ENCODE measurements at regions of chr7 and their contacts with region 1.

Region 1: GRCh38 chr7:24819916-24820689 is 62.8 kb upstream of the GSDME start:
- DNase-seq: peak; percentile 88
- ATAC-seq: peak; percentile 56
- H3K4me3 ChIP-seq: peak overlapping the region in 1 of 5 experiments; percentile 17
- H3K4me3 Mint-ChIP-seq: peak overlapping the region; percentile 83
- H3K27ac ChIP-seq: peak overlapping the region; percentile 76 to 83
- H3K27ac Mint-ChIP-seq: peak overlapping the region; percentile 94
- H3K4me1 ChIP-seq: peaks cover 27% of the 10 kb centered on the region in 2 donors
- H3K4me1 Mint-ChIP-seq: peaks cover 40% of the 10 kb centered on the region
- H3K27me3 ChIP-seq: no peaks in the 10 kb centered on the region
- H3K27me3 Mint-ChIP-seq: no peaks in the 10 kb centered on the region
- CTCF ChIP-seq: peak; percentile 93

Region 2: GRCh38 chr7:24786941-24787340 is 33.2 kb before region 1 on chr7:
- CTCF ChIA-PET with region 1: no interaction called
- POLR2A ChIA-PET with region 1: no interaction called
- intact Hi-C with region 1: no loop called
- DNase-seq: no peak
- ATAC-seq: peak; percentile 33
- H3K4me3 ChIP-seq: no peak overlapping the region
- H3K4me3 Mint-ChIP-seq: no peak overlapping the region
- H3K27ac ChIP-seq: no peak overlapping the region
- H3K27ac Mint-ChIP-seq: no peak overlapping the region
- H3K4me1 ChIP-seq: no peaks in the 10 kb centered on the region
- H3K4me1 Mint-ChIP-seq: no peaks in the 10 kb centered on the region
- H3K27me3 ChIP-seq: peaks cover 0 to 2% (median 0%) of the 10 kb centered on the region in 4 experiments
- H3K27me3 Mint-ChIP-seq: no peaks in the 10 kb centered on the region
- CTCF ChIP-seq: no peak

Region 3: DNA sequence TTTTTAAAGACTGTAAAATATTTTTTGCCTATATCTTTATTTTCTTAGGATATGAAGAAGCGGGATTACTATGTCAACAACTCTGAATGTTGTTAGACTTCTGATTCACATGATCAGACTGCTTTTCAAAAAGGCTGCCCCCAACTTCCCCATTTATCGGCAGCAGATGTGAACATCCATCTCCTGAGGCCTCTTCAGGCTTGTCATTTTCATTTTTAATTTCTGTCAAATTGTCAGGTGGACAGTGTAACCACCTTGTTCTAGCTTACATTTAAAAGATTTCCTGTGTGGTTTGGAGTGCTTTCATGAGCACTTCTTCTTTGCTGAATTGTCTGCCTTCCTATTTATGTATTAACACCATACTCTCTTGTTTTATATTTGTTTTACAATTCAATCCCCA is 16.0 kb after region 1 on chr7:
- CTCF ChIA-PET with region 1: interaction called, 129 read pairs
- POLR2A ChIA-PET with region 1: interaction called, 17 read pairs
- intact Hi-C with region 1: loop called (anchors 1 kb)
- DNase-seq: peak; percentile 89
- ATAC-seq: peak; percentile 80
- H3K4me3 ChIP-seq: peak overlapping the region in 1 of 5 experiments; percentile 46
- H3K4me3 Mint-ChIP-seq: peak overlapping the region; percentile 80
- H3K27ac ChIP-seq: peak overlapping the region; percentile 97
- H3K27ac Mint-ChIP-seq: peak overlapping the region; percentile 98
- H3K4me1 ChIP-seq: peaks cover 72 to 74% of the 10 kb centered on the region in 2 donors
- H3K4me1 Mint-ChIP-seq: peaks cover 75% of the 10 kb centered on the region
- H3K27me3 ChIP-seq: no peaks in the 10 kb centered on the region
- H3K27me3 Mint-ChIP-seq: no peaks in the 10 kb centered on the region
- CTCF ChIP-seq: no peak

Region 4: GRCh38 chr7:24877790-24878311 is 57.7 kb after region 1 on chr7:
- CTCF ChIA-PET with region 1: interaction called, 38 read pairs
- POLR2A ChIA-PET with region 1: interaction called, 4 read pairs
- intact Hi-C with region 1: loop called (anchors 1 kb)
- DNase-seq: peak; percentile 59
- ATAC-seq: peak; percentile 90
- H3K4me3 ChIP-seq: no peak overlapping the region
- H3K4me3 Mint-ChIP-seq: peak overlapping the region; percentile 43
- H3K27ac ChIP-seq: peak overlapping the region in 1 of 2 donors; percentile 43
- H3K27ac Mint-ChIP-seq: peak overlapping the region; percentile 54
- H3K4me1 ChIP-seq: peaks cover 19 to 20% of the 10 kb centered on the region in 2 donors
- H3K4me1 Mint-ChIP-seq: peaks cover 29% of the 10 kb centered on the region
- H3K27me3 ChIP-seq: no peaks in the 10 kb centered on the region
- H3K27me3 Mint-ChIP-seq: no peaks in the 10 kb centered on the region
- CTCF ChIP-seq: no peak

Region 5: DNA sequence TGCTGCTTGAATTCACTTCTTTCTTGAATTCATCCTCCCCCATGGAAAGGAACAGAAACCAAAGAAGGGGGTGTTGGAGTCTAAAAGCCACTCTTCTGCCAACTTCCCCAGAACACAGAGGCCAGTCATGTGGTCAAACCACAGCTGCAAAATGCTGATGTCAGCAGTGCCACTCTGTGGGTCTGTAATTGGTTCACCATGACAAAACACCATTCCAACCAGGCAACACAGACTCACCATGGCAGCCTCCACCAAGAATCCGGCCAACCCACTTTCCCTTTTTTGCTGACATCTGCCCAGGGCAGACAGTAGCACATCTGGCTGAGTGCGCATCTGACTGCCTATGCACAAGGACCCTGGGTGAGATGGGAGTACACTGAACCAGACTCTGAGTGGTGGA is 143.1 kb after region 1 on chr7:
- CTCF ChIA-PET with region 1: interaction called, 9 read pairs
- POLR2A ChIA-PET with region 1: no interaction called
- intact Hi-C with region 1: loop called (anchors 1 kb)
- DNase-seq: peak; percentile 88
- ATAC-seq: peak; percentile 88
- H3K4me3 ChIP-seq: no peak overlapping the region
- H3K4me3 Mint-ChIP-seq: peak overlapping the region; percentile 64
- H3K27ac ChIP-seq: peak overlapping the region; percentile 3 to 54
- H3K27ac Mint-ChIP-seq: peak overlapping the region; percentile 89
- H3K4me1 ChIP-seq: peaks cover 42 to 47% of the 10 kb centered on the region in 2 donors
- H3K4me1 Mint-ChIP-seq: peaks cover 80% of the 10 kb centered on the region
- H3K27me3 ChIP-seq: no peaks in the 10 kb centered on the region
- H3K27me3 Mint-ChIP-seq: no peaks in the 10 kb centered on the region
- CTCF ChIP-seq: no peak

Region 6: GRCh38 chr7:25075459-25075858 is 255.4 kb after region 1 on chr7:
- CTCF ChIA-PET with region 1: interaction called, 246 read pairs
- POLR2A ChIA-PET with region 1: interaction called, 6 read pairs
- intact Hi-C with region 1: loop called (anchors 1 kb)
- DNase-seq: no peak
- ATAC-seq: no peak
- H3K4me3 ChIP-seq: no peak overlapping the region
- H3K4me3 Mint-ChIP-seq: no peak overlapping the region
- H3K27ac ChIP-seq: no peak overlapping the region
- H3K27ac Mint-ChIP-seq: no peak overlapping the region
- H3K4me1 ChIP-seq: no peaks in the 10 kb centered on the region
- H3K4me1 Mint-ChIP-seq: no peaks in the 10 kb centered on the region
- H3K27me3 ChIP-seq: no peaks in the 10 kb centered on the region
- H3K27me3 Mint-ChIP-seq: peaks cover 3% of the 10 kb centered on the region
- CTCF ChIP-seq: no peak

Measured in B cell (primary cell).